Endothelial cell of umbilical vein (primary cell): ENCODE measurements at regions of chr5 and their contacts with region 1.

Region 1: GRCh38 chr5:149114403-149115312 is 26.6 kb upstream of the ABLIM3 start:
- DNase-seq: peak; percentile 88
- H3K4me3 ChIP-seq: no peak overlapping the region
- H3K27ac ChIP-seq: no peak overlapping the region
- H3K4me1 ChIP-seq: peaks cover 6% of the 10 kb centered on the region
- H3K27me3 ChIP-seq: no peaks in the 10 kb centered on the region
- CTCF ChIP-seq: peak; percentile 83 to 88
- POLR2A ChIP-seq: no peak

Region 2: GRCh38 chr5:148740966-148741742 is 373.5 kb before region 1 on chr5:
- CTCF ChIA-PET with region 1: interaction called, 368 read pairs
- POLR2A ChIA-PET with region 1: no interaction called
- dilution Hi-C with region 1: loop called (anchors 25 kb)
- intact Hi-C with region 1: loop called (anchors 1 kb)
- DNase-seq: peak; percentile 82
- H3K4me3 ChIP-seq: no peak overlapping the region
- H3K27ac ChIP-seq: no peak overlapping the region
- H3K4me1 ChIP-seq: no peaks in the 10 kb centered on the region
- H3K27me3 ChIP-seq: no peaks in the 10 kb centered on the region
- CTCF ChIP-seq: peak; percentile 49
- POLR2A ChIP-seq: no peak

Region 3: GRCh38 chr5:148791334-148791667 is 323.4 kb before region 1 on chr5:
- CTCF ChIA-PET with region 1: no interaction called
- POLR2A ChIA-PET with region 1: no interaction called
- dilution Hi-C with region 1: no loop called
- intact Hi-C with region 1: no loop called
- DNase-seq: peak; percentile 12
- H3K4me3 ChIP-seq: no peak overlapping the region
- H3K27ac ChIP-seq: no peak overlapping the region
- H3K4me1 ChIP-seq: no peaks in the 10 kb centered on the region
- H3K27me3 ChIP-seq: no peaks in the 10 kb centered on the region
- CTCF ChIP-seq: no peak
- POLR2A ChIP-seq: no peak

Region 4: DNA sequence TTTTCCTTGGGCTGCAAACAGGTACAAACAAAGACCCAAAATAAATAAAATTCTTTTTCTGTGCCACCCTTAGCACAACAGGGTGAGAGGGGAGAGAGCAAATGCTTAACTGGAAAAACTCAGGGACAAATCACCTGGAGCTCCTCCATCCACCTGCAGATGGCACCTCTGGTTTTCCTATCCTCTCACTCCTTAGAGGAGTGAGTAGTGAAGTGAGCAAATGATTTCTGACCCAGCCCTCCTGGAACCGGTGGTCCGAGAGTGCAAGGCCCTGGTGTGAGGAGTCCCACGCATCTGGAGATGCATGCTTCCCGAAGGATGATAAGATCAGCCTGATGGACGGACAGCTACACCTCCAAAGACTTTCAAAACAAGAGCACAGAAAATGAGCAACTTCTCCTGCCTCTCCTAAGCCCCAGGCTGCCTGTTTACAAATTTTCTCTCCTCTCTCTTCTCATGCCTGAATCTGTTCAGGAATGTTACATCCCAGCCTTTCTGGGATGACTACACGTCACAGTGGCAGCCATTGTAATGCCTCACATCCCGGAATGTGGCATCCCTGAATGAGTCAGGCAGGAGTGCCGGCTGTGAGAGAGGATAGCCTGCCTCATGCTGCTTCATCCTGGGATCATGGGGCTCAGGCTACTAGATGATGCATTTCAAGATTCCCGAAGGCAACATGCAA is 201.8 kb before region 1 on chr5:
- CTCF ChIA-PET with region 1: interaction called, 10 read pairs
- POLR2A ChIA-PET with region 1: no interaction called
- dilution Hi-C with region 1: no loop called
- intact Hi-C with region 1: no loop called
- DNase-seq: peak; percentile 79
- H3K4me3 ChIP-seq: no peak overlapping the region
- H3K27ac ChIP-seq: peak overlapping the region; percentile 96
- H3K4me1 ChIP-seq: peaks cover 55% of the 10 kb centered on the region
- H3K27me3 ChIP-seq: no peaks in the 10 kb centered on the region
- CTCF ChIP-seq: peak in 1 of 2 donors; percentile 4
- POLR2A ChIP-seq: no peak

Region 5: GRCh38 chr5:148979104-148979723 is 135.4 kb before region 1 on chr5:
- CTCF ChIA-PET with region 1: interaction called, 11 read pairs
- POLR2A ChIA-PET with region 1: no interaction called
- dilution Hi-C with region 1: no loop called
- intact Hi-C with region 1: no loop called
- DNase-seq: no peak
- H3K4me3 ChIP-seq: no peak overlapping the region
- H3K27ac ChIP-seq: no peak overlapping the region
- H3K4me1 ChIP-seq: peaks cover 28% of the 10 kb centered on the region
- H3K27me3 ChIP-seq: no peaks in the 10 kb centered on the region
- CTCF ChIP-seq: no peak
- POLR2A ChIP-seq: no peak

Region 6: DNA sequence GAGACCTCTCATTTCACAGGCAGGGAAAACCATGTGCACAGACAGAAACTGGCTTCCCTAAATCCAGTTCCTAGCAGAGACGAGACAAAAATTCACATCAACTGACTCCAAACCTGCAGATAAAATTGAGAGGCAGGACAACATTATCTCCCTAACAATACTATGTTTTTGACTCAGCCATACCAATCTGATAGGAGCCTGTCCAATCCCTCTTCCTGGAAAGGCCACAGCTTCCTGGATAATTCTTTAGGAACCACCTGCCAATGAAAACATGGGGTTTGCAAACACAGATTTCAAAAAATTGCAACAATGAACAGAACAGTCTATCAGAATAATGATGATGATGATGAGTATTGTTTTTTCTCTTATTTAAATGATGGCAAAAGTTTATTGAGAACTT is 74.2 kb before region 1 on chr5:
- CTCF ChIA-PET with region 1: interaction called, 278 read pairs
- POLR2A ChIA-PET with region 1: interaction called, 3 read pairs
- dilution Hi-C with region 1: no loop called
- intact Hi-C with region 1: loop called (anchors 1 kb)
- DNase-seq: peak; percentile 83
- H3K4me3 ChIP-seq: no peak overlapping the region
- H3K27ac ChIP-seq: peak overlapping the region; percentile 57
- H3K4me1 ChIP-seq: peaks cover 57% of the 10 kb centered on the region
- H3K27me3 ChIP-seq: no peaks in the 10 kb centered on the region
- CTCF ChIP-seq: no peak
- POLR2A ChIP-seq: peak; percentile 60

Region 7: GRCh38 chr5:149128023-149128875 is 13.6 kb after region 1 on chr5:
- CTCF ChIA-PET with region 1: interaction called, 53 read pairs
- POLR2A ChIA-PET with region 1: no interaction called
- dilution Hi-C with region 1: no loop called
- intact Hi-C with region 1: no loop called
- DNase-seq: peak; percentile 16
- H3K4me3 ChIP-seq: no peak overlapping the region
- H3K27ac ChIP-seq: no peak overlapping the region
- H3K4me1 ChIP-seq: peaks cover 12% of the 10 kb centered on the region
- H3K27me3 ChIP-seq: no peaks in the 10 kb centered on the region
- CTCF ChIP-seq: peak; percentile 75 to 80
- POLR2A ChIP-seq: no peak

Region 8: GRCh38 chr5:149268928-149269557 is 154.4 kb after region 1 on chr5:
- CTCF ChIA-PET with region 1: interaction called, 11 read pairs
- POLR2A ChIA-PET with region 1: no interaction called
- dilution Hi-C with region 1: no loop called
- intact Hi-C with region 1: no loop called
- DNase-seq: peak; percentile 47
- H3K4me3 ChIP-seq: no peak overlapping the region
- H3K27ac ChIP-seq: no peak overlapping the region
- H3K4me1 ChIP-seq: peaks cover 14% of the 10 kb centered on the region
- H3K27me3 ChIP-seq: peaks cover 0 to 1% of the 10 kb centered on the region in 2 experiments
- CTCF ChIP-seq: peak; percentile 49 to 57
- POLR2A ChIP-seq: no peak

Region 9: GRCh38 chr5:149860801-149861322 is 746.2 kb after region 1 on chr5:
- CTCF ChIA-PET with region 1: no interaction called
- POLR2A ChIA-PET with region 1: no interaction called
- dilution Hi-C with region 1: no loop called
- intact Hi-C with region 1: no loop called
- DNase-seq: no peak
- H3K4me3 ChIP-seq: no peak overlapping the region
- H3K27ac ChIP-seq: no peak overlapping the region
- H3K4me1 ChIP-seq: peaks cover 12% of the 10 kb centered on the region
- H3K27me3 ChIP-seq: no peaks in the 10 kb centered on the region
- CTCF ChIP-seq: no peak
- POLR2A ChIP-seq: no peak